ENCODE measurements at regions of chr11 and their contacts with region 1.

Region 1: GRCh38 chr11:119584193-119585037 is 144.6 kb downstream of the NECTIN1 start:
- DNase-seq: no peak
- ATAC-seq: peak; percentile 75
- H3K4me3 ChIP-seq: peak overlapping the region; percentile 39 to 46
- H3K27ac ChIP-seq: no peak overlapping the region
- H3K4me1 ChIP-seq: peaks cover 7% of the 10 kb centered on the region; the same call in 1 of the 2 replicates
- H3K27me3 ChIP-seq: peaks cover 18% of the 10 kb centered on the region
- CTCF ChIP-seq: no peak

Region 2: GRCh38 chr11:119403021-119403420 is 181.4 kb before region 1 on chr11:
- CTCF ChIA-PET with region 1: interaction called, 13 read pairs
- POLR2A ChIA-PET with region 1: no interaction called
- in situ Hi-C with region 1: no loop called
- intact Hi-C with region 1: no loop called
- DNase-seq: no peak
- ATAC-seq: no peak
- H3K4me3 ChIP-seq: no peak overlapping the region
- H3K27ac ChIP-seq: no peak overlapping the region
- H3K4me1 ChIP-seq: no peaks in the 10 kb centered on the region; the same call in 1 of the 2 replicates
- H3K27me3 ChIP-seq: no peaks in the 10 kb centered on the region
- CTCF ChIP-seq: no peak

Region 3: GRCh38 chr11:119518746-119519730 is 65.4 kb before region 1 on chr11:
- CTCF ChIA-PET with region 1: no interaction called
- POLR2A ChIA-PET with region 1: no interaction called
- in situ Hi-C with region 1: no loop called
- intact Hi-C with region 1: no loop called
- DNase-seq: no peak
- ATAC-seq: no peak
- H3K4me3 ChIP-seq: no peak overlapping the region
- H3K27ac ChIP-seq: no peak overlapping the region
- H3K4me1 ChIP-seq: no peaks in the 10 kb centered on the region
- H3K27me3 ChIP-seq: peaks cover 20% of the 10 kb centered on the region
- CTCF ChIP-seq: no peak

Measured in Panc1 (cell line).